B cell (primary cell): ENCODE measurements at regions of chr10 and their contacts with region 1.

Region 1: DNA sequence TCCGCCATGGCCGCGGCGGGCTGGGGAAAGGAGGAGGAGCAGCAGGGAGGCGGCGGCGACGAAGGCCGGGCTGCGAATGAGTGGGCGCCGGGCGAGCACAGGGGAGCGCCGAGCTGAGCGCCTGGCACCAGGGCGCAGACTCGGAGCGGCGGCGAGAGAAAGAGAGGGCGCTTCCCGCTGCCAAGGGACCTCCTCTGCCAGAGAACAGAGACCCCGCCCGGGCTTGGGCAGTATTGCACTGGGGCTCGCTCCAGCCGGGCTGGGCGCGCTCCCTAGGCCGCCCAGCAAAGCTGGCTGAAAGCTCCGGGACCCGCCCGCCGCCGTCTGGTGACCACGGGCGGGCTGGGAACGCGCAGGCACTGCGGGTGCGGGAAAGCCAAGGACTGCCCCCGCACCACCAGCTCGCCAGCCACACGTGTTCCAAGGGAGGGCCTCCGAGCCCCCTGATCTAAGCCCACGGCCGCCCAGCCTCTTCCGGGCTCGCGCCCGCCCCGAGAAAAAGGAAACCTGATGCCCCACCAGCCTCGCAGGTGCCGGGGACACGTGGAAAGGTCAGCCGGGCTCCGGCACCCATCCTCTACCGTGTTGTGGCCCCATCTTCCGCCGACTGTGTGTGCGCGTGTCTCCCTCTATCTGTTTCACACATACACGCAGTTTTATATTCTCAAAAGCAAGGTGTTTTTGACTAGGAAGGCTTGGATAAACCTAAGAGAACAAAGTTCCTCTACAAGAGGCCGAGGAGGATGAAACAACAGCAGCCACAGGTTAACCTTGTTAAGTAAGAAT is at the start of gene CCDC6:
- DNase-seq: peak; percentile 96
- ATAC-seq: peak; percentile 83
- H3K4me3 ChIP-seq: peak within 1 kb of the TSS; percentile 53 to 96 (median 89)
- H3K4me3 Mint-ChIP-seq: peak within 1 kb of the TSS; percentile 98
- H3K27ac ChIP-seq: peak within 1 kb of the TSS; percentile 85 to 95
- H3K27ac Mint-ChIP-seq: peak within 1 kb of the TSS; percentile 96
- H3K4me1 ChIP-seq: peaks cover 40 to 42% of the 10 kb centered on the region in 2 donors
- H3K4me1 Mint-ChIP-seq: peaks cover 56% of the 10 kb centered on the region
- H3K27me3 ChIP-seq: no peaks in the 10 kb centered on the region
- H3K27me3 Mint-ChIP-seq: no peaks in the 10 kb centered on the region
- CTCF ChIP-seq: peak; percentile 82
- total RNA-seq, gene CCDC6: 30.1 and 32.1 TPM in 2 replicates

Region 2: GRCh38 chr10:58384999-58385783 is 1521.4 kb before region 1 on chr10 and contains the start of gene TFAM:
- CTCF ChIA-PET with region 1: interaction called, 3 read pairs
- POLR2A ChIA-PET with region 1: no interaction called
- intact Hi-C with region 1: loop called (anchors 10 kb)
- DNase-seq: peak; percentile 97
- ATAC-seq: peak; percentile 84
- H3K4me3 ChIP-seq: peak within 1 kb of the TSS; percentile 73 to 89 (median 82)
- H3K4me3 Mint-ChIP-seq: peak within 1 kb of the TSS; percentile 92
- H3K27ac ChIP-seq: peak within 1 kb of the TSS; percentile 84 to 97
- H3K27ac Mint-ChIP-seq: peak within 1 kb of the TSS; percentile 96
- H3K4me1 ChIP-seq: peaks cover 24 to 29% of the 10 kb centered on the region in 2 donors
- H3K4me1 Mint-ChIP-seq: peaks cover 43% of the 10 kb centered on the region
- H3K27me3 ChIP-seq: no peaks in the 10 kb centered on the region
- H3K27me3 Mint-ChIP-seq: no peaks in the 10 kb centered on the region
- CTCF ChIP-seq: peak; percentile 47
- total RNA-seq, gene TFAM: 38.4 and 40.6 TPM in 2 replicates

Region 3: GRCh38 chr10:58451193-58451889 is 1455.3 kb before region 1 on chr10:
- CTCF ChIA-PET with region 1: no interaction called
- POLR2A ChIA-PET with region 1: no interaction called
- intact Hi-C with region 1: no loop called
- DNase-seq: no peak
- ATAC-seq: no peak
- H3K4me3 ChIP-seq: no peak overlapping the region
- H3K4me3 Mint-ChIP-seq: no peak overlapping the region
- H3K27ac ChIP-seq: no peak overlapping the region
- H3K27ac Mint-ChIP-seq: no peak overlapping the region
- H3K4me1 ChIP-seq: no peaks in the 10 kb centered on the region
- H3K4me1 Mint-ChIP-seq: no peaks in the 10 kb centered on the region
- H3K27me3 ChIP-seq: no peaks in the 10 kb centered on the region
- H3K27me3 Mint-ChIP-seq: peaks cover 6% of the 10 kb centered on the region
- CTCF ChIP-seq: no peak

Region 4: GRCh38 chr10:59808896-59809643 is 97.5 kb before region 1 on chr10:
- CTCF ChIA-PET with region 1: interaction called, 4 read pairs
- POLR2A ChIA-PET with region 1: no interaction called
- intact Hi-C with region 1: loop called (anchors 5 kb)
- DNase-seq: peak; percentile 60
- ATAC-seq: peak; percentile 65
- H3K4me3 ChIP-seq: no peak overlapping the region
- H3K4me3 Mint-ChIP-seq: no peak overlapping the region
- H3K27ac ChIP-seq: no peak overlapping the region
- H3K27ac Mint-ChIP-seq: peak overlapping the region; percentile 16
- H3K4me1 ChIP-seq: peaks cover 0 to 5% of the 10 kb centered on the region in 2 donors
- H3K4me1 Mint-ChIP-seq: peaks cover 20% of the 10 kb centered on the region
- H3K27me3 ChIP-seq: no peaks in the 10 kb centered on the region
- H3K27me3 Mint-ChIP-seq: no peaks in the 10 kb centered on the region
- CTCF ChIP-seq: peak; percentile 69

Region 5: GRCh38 chr10:59865101-59865500 is 41.5 kb before region 1 on chr10:
- CTCF ChIA-PET with region 1: interaction called, 175 read pairs
- POLR2A ChIA-PET with region 1: interaction called, 5 read pairs
- intact Hi-C with region 1: loop called (anchors 1 kb)
- DNase-seq: peak; percentile 69
- ATAC-seq: peak; percentile 74
- H3K4me3 ChIP-seq: no peak overlapping the region
- H3K4me3 Mint-ChIP-seq: peak overlapping the region; percentile 37
- H3K27ac ChIP-seq: peak overlapping the region in 1 of 2 donors; percentile 5
- H3K27ac Mint-ChIP-seq: peak overlapping the region; percentile 64
- H3K4me1 ChIP-seq: peaks cover 19 to 29% of the 10 kb centered on the region in 2 donors
- H3K4me1 Mint-ChIP-seq: peaks cover 63% of the 10 kb centered on the region
- H3K27me3 ChIP-seq: no peaks in the 10 kb centered on the region
- H3K27me3 Mint-ChIP-seq: no peaks in the 10 kb centered on the region
- CTCF ChIP-seq: peak; percentile 75

Region 6: GRCh38 chr10:59885430-59886134 is 21.0 kb before region 1 on chr10:
- CTCF ChIA-PET with region 1: interaction called, 8 read pairs
- POLR2A ChIA-PET with region 1: interaction called, 14 read pairs
- intact Hi-C with region 1: loop called (anchors 1 kb)
- DNase-seq: peak; percentile 90
- ATAC-seq: peak; percentile 96
- H3K4me3 ChIP-seq: peak overlapping the region in 3 of 5 experiments; percentile 0 to 47 (median 11)
- H3K4me3 Mint-ChIP-seq: peak overlapping the region; percentile 62
- H3K27ac ChIP-seq: peak overlapping the region in 1 of 2 donors; percentile 42
- H3K27ac Mint-ChIP-seq: peak overlapping the region; percentile 79
- H3K4me1 ChIP-seq: peaks cover 67 to 76% of the 10 kb centered on the region in 2 donors
- H3K4me1 Mint-ChIP-seq: peaks cover 87% of the 10 kb centered on the region
- H3K27me3 ChIP-seq: no peaks in the 10 kb centered on the region
- H3K27me3 Mint-ChIP-seq: no peaks in the 10 kb centered on the region
- CTCF ChIP-seq: no peak

Region 7: DNA sequence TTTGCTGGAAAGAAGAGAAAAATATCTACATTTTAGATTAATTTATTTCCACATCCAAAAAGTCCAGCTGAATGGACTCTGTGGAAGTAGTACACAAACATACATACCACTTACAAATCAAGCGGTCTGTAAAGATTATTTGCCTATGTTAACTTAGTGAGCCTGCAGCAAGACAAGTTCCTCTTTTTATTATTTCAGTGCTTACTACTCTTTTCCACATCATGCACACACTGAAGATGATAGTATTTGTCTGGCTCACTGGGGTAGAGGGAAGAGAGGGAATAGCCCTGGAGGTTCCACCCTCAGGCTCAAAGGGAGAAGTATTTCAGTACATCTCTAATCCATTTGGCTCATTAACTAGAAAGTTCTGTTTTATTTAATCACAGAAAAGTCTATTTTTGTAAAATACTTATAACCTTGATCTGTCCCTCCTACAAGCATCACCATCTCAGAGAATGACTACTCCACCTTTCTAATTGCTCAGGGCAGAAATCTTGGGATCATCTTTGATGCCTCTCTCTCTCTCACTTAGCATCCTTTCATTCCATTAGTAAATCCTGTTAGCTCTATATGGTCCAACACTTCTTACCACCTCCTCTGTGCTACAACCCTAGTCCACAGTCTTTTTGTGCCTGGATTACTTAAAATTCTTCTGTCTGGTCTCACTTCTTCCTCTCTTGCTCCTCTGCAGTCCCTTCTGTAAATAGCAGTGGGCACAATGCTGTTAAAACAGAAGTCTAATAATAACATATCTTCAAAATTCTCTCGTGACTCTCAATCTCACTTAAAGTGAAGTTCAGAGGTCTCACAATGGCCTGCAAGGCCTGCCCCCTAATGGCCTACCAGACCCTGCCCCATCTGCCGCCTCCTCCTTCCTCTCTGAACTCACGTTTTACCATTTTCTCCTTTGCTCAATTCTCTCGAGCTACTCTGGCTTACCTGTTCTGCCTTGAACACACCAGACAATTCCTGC is 64.1 kb after region 1 on chr10:
- CTCF ChIA-PET with region 1: interaction called, 3 read pairs
- POLR2A ChIA-PET with region 1: no interaction called
- intact Hi-C with region 1: loop called (anchors 2 kb)
- DNase-seq: peak; percentile 50
- ATAC-seq: peak; percentile 79
- H3K4me3 ChIP-seq: no peak overlapping the region
- H3K4me3 Mint-ChIP-seq: no peak overlapping the region
- H3K27ac ChIP-seq: peak overlapping the region; percentile 43 to 65
- H3K27ac Mint-ChIP-seq: no peak overlapping the region
- H3K4me1 ChIP-seq: peaks cover 13 to 19% of the 10 kb centered on the region in 2 donors
- H3K4me1 Mint-ChIP-seq: peaks cover 2% of the 10 kb centered on the region
- H3K27me3 ChIP-seq: no peaks in the 10 kb centered on the region
- H3K27me3 Mint-ChIP-seq: no peaks in the 10 kb centered on the region
- CTCF ChIP-seq: no peak

Region 8: GRCh38 chr10:60299961-60300883 is 393.6 kb after region 1 on chr10:
- CTCF ChIA-PET with region 1: no interaction called
- POLR2A ChIA-PET with region 1: no interaction called
- intact Hi-C with region 1: no loop called
- DNase-seq: no peak
- ATAC-seq: no peak
- H3K4me3 ChIP-seq: no peak overlapping the region
- H3K4me3 Mint-ChIP-seq: no peak overlapping the region
- H3K27ac ChIP-seq: no peak overlapping the region
- H3K27ac Mint-ChIP-seq: no peak overlapping the region
- H3K4me1 ChIP-seq: no peaks in the 10 kb centered on the region
- H3K4me1 Mint-ChIP-seq: no peaks in the 10 kb centered on the region
- H3K27me3 ChIP-seq: no peaks in the 10 kb centered on the region
- H3K27me3 Mint-ChIP-seq: no peaks in the 10 kb centered on the region
- CTCF ChIP-seq: no peak

Region 9: DNA sequence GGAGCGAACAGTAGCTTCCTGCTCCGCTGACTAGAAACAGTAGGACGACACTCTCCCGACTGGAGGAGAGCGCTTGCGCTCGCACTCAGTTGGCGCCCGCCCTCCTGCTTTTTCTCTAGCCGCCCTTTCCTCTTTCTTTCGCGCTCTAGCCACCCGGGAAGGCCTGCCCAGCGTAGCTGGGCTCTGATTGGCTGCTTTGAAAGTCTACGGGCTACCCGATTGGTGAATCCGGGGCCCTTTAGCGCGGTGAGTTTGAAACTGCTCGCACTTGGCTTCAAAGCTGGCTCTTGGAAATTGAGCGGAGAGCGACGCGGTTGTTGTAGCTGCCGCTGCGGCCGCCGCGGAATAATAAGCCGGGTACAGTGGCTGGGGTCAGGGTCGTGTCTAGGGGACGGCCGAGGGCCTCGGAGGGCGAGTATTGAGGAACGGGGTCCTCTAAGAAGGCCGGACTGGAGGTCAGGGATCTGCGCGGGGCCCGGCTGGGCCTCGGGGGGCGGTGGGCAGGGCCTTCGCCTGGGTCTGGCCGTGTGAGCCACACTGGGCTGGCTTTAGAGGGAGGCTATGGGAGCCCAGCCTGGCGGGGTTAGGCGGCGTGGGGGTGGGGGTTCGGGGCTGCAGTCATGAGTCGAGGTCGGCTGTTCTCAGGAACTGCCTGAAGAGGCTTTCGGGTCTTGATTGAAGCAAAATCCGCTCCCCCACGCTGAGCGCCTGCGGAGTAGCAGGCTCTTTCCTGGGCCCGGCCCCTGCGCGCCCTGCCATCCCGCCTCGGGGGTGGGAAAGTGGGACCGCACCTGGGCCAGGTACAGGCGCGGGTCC is 871.8 kb after region 1 on chr10 and contains the start of gene CDK1:
- CTCF ChIA-PET with region 1: no interaction called
- POLR2A ChIA-PET with region 1: no interaction called
- intact Hi-C with region 1: loop called (anchors 1 kb)
- DNase-seq: peak; percentile 96
- ATAC-seq: peak; percentile 99
- H3K4me3 ChIP-seq: peak within 1 kb of the TSS; percentile 45 to 77 (median 56)
- H3K4me3 Mint-ChIP-seq: peak within 1 kb of the TSS; percentile 98
- H3K27ac ChIP-seq: no peak within 1 kb of the TSS
- H3K27ac Mint-ChIP-seq: peak within 1 kb of the TSS; percentile 75
- H3K4me1 ChIP-seq: peaks cover 9% of the 10 kb centered on the region in 2 donors
- H3K4me1 Mint-ChIP-seq: peaks cover 13% of the 10 kb centered on the region
- H3K27me3 ChIP-seq: no peaks in the 10 kb centered on the region
- H3K27me3 Mint-ChIP-seq: no peaks in the 10 kb centered on the region
- CTCF ChIP-seq: no peak
- total RNA-seq, gene CDK1: 0.71 and 1.1 TPM in 2 replicates